CD8-positive, alpha-beta T cell (primary cell): ENCODE measurements at regions of chr20 and their contacts with region 1.

Region 1: GRCh38 chr20:58650776-58651558 is at the start of gene STX16:
- DNase-seq: peak; percentile 76 to 95 (median 86)
- ATAC-seq: peak; percentile 63
- H3K4me3 ChIP-seq: peak within 1 kb of the TSS; percentile 86 to 96
- H3K4me3 Mint-ChIP-seq: peak within 1 kb of the TSS; percentile 99
- H3K27ac ChIP-seq: peak within 1 kb of the TSS; percentile 87 to 92
- H3K27ac Mint-ChIP-seq: peak within 1 kb of the TSS; percentile 99
- H3K4me1 ChIP-seq: peaks cover 30% of the 10 kb centered on the region
- H3K4me1 Mint-ChIP-seq: peaks cover 27% of the 10 kb centered on the region
- H3K27me3 ChIP-seq: no peaks in the 10 kb centered on the region
- H3K27me3 Mint-ChIP-seq: no peaks in the 10 kb centered on the region
- CTCF ChIP-seq: peak; percentile 88
- total RNA-seq, gene STX16: 161 to 177 TPM

Region 2: DNA sequence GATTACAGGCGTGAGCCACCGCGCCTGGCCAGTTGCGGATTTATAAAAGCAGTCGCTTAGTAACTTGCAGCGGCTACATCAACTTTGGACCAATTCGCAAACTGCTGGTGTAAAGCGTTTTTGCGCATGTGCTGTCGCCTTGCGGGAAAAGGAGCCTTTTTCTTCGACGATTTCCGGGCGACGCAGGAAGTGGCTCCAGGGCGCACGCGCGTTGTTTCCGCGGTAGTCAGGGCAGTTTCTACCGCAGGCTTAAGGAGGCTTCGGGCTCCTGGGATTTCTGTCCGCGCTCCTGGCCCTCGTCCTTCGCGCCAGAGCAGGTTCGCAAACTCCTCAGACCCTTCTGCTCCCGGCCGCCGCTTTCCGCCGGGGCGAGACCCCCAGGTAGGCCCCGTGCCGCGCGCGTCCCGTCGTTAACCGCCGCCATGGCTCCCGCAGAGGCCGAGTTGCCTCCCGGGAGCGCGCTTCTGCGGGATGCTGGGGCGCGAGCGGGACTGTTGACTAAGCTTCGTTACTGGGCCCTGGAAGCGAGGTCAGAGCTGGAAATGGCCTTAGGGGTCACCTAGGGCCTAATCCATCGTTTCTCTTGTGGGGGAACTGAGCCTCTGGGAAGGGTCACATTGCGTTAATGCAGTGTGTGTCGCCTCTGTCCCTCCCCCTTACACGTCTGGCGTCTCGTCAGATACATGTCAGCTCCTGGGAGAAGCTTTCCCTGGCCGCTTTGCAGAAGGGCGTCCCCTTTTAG is 1299.8 kb before region 1 on chr20 and contains the start of gene RAE1:
- CTCF ChIA-PET with region 1: no interaction called
- POLR2A ChIA-PET with region 1: no interaction called
- intact Hi-C with region 1: loop called (anchors 5 to 10 kb)
- DNase-seq: peak; percentile 80 to 97 (median 92)
- ATAC-seq: peak; percentile 86
- H3K4me3 ChIP-seq: peak within 1 kb of the TSS; percentile 78 to 97
- H3K4me3 Mint-ChIP-seq: peak within 1 kb of the TSS; percentile 90
- H3K27ac ChIP-seq: peak within 1 kb of the TSS; percentile 78 to 84
- H3K27ac Mint-ChIP-seq: peak within 1 kb of the TSS; percentile 92
- H3K4me1 ChIP-seq: peaks cover 23% of the 10 kb centered on the region
- H3K4me1 Mint-ChIP-seq: peaks cover 27% of the 10 kb centered on the region
- H3K27me3 ChIP-seq: no peaks in the 10 kb centered on the region
- H3K27me3 Mint-ChIP-seq: no peaks in the 10 kb centered on the region
- CTCF ChIP-seq: no peak
- total RNA-seq, gene RAE1: 58.9 to 59.4 TPM

Region 3: GRCh38 chr20:57718490-57719271 is 932.3 kb before region 1 on chr20:
- CTCF ChIA-PET with region 1: no interaction called
- POLR2A ChIA-PET with region 1: no interaction called
- intact Hi-C with region 1: loop called (anchors 5 to 10 kb)
- DNase-seq: peak; percentile 78 to 96 (median 90)
- ATAC-seq: peak; percentile 97
- H3K4me3 ChIP-seq: peak overlapping the region; percentile 37 to 55
- H3K4me3 Mint-ChIP-seq: peak overlapping the region; percentile 69
- H3K27ac ChIP-seq: no peak overlapping the region
- H3K27ac Mint-ChIP-seq: peak overlapping the region; percentile 41
- H3K4me1 ChIP-seq: peaks cover 11% of the 10 kb centered on the region
- H3K4me1 Mint-ChIP-seq: peaks cover 11% of the 10 kb centered on the region
- H3K27me3 ChIP-seq: peaks cover 0 to 2% of the 10 kb centered on the region in 2 experiments
- H3K27me3 Mint-ChIP-seq: peaks cover 4% of the 10 kb centered on the region
- CTCF ChIP-seq: no peak

Region 4: DNA sequence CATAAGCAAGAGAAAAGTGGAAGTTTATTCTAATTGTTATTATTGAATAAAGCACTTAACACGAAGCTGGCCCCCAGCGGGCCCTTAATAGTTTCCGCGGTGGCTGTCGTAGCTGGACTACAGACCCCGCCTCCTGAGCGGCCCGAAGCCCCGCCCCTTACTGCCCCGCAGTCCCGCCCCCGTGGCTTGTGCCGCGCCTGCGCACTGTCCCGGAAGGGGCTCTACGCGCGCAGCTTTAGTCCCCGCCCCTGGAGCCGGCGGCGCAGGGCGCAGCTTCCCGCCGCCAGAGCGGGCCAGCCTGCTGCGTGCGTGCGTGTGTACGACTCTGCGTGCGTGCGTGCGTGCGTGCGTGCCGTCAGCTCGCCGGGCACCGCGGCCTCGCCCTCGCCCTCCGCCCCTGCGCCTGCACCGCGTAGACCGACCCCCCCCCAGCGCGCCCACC is 262.1 kb before region 1 on chr20 and contains the start of gene VAPB:
- CTCF ChIA-PET with region 1: no interaction called
- POLR2A ChIA-PET with region 1: interaction called, 8 read pairs
- intact Hi-C with region 1: loop called (anchors 1 kb)
- DNase-seq: peak; percentile 94 to 99 (median 97)
- ATAC-seq: peak; percentile 95
- H3K4me3 ChIP-seq: peak within 1 kb of the TSS; percentile 87 to 90
- H3K4me3 Mint-ChIP-seq: peak within 1 kb of the TSS; percentile 88
- H3K27ac ChIP-seq: peak within 1 kb of the TSS; percentile 98 to 99
- H3K27ac Mint-ChIP-seq: peak within 1 kb of the TSS; percentile 96
- H3K4me1 ChIP-seq: peaks cover 43% of the 10 kb centered on the region
- H3K4me1 Mint-ChIP-seq: peaks cover 40% of the 10 kb centered on the region
- H3K27me3 ChIP-seq: peaks cover 0 to 2% of the 10 kb centered on the region in 2 experiments
- H3K27me3 Mint-ChIP-seq: peaks cover 4% of the 10 kb centered on the region
- CTCF ChIP-seq: no peak
- total RNA-seq, gene VAPB: 29.3 to 32.3 TPM

Region 5: DNA sequence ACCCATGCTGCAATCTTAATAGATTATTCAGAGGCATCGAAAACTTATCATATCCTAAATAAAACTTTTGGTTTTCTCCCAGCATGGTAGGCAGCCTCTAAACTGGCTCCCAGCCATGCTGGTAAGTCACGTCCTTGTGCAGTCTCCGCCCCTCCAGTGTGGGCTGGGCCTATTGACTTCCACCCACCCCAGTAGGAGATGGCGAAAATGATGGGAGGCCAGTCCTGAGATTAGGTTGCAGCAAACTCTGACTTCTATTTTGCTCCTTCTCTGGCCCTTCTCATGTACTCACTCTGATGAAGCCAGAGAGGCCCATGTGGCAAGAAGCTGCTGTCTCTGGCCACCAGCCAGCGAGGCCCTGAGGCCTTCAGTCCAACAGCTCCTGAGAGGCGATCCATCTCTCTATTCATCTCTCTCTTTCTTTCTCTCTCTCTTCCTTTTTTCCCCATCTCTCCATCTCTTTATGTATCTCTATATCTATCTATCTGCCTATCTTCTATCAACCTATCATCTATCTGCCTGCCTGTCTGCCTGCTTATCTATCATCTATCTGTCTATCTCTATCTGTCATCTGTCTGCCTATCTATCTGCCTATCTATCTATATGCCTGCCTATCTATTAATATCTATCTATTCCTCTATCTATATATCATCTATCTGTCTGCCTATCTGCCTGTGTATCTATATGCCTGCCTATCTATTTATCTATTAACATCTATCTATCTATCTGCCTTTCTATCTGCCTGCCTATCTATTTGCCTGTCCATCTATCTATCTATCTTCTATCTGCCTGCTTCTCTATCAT is 52.6 kb before region 1 on chr20:
- CTCF ChIA-PET with region 1: no interaction called
- POLR2A ChIA-PET with region 1: no interaction called
- intact Hi-C with region 1: no loop called
- DNase-seq: no peak
- ATAC-seq: no peak
- H3K4me3 ChIP-seq: no peak overlapping the region
- H3K4me3 Mint-ChIP-seq: no peak overlapping the region
- H3K27ac ChIP-seq: no peak overlapping the region
- H3K27ac Mint-ChIP-seq: no peak overlapping the region
- H3K4me1 ChIP-seq: no peaks in the 10 kb centered on the region
- H3K4me1 Mint-ChIP-seq: no peaks in the 10 kb centered on the region
- H3K27me3 ChIP-seq: no peaks in the 10 kb centered on the region
- H3K27me3 Mint-ChIP-seq: peaks cover 9% of the 10 kb centered on the region
- CTCF ChIP-seq: no peak

Region 6: DNA sequence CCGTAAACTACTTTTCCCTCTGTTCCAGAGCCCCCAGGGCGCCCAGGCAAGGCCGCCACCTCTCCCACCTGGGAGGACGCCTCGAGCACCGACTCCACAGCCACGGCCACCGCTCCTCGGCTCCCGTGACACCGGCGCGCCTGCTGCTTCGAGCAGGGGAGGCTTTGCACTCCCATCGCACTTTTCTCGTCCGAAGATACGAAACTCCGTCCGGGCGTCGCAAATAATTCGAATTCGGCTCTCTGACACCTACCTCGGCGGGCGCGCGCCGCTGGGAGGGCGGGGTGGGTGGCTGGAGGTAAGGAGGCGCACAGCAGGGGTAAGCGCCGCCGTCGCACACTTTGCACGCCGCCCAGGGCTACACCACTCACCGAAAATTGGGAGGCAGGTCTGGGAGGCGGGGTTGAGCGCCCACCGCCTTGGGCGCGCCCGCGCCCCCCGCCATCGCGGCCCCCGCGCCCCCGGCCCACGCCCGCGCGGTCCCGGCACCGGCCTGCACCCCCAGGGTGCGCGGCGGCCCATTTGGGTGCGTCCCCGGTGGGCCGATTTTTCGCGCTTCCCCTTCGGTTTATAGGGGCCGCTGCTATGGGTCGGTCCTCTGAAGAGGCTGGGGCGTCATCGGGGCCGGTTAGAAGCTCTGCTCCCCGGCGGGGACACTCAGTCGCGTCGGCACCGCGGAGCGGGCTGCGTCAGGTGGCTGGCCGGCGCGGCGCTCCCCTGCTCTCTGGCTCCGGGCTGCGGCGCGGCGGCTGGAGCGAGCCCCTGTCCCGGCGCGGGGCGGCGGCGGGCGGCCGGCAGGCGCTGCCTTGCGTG is 237.8 kb after region 1 on chr20:
- CTCF ChIA-PET with region 1: no interaction called
- POLR2A ChIA-PET with region 1: interaction called, 23 read pairs
- intact Hi-C with region 1: loop called (anchors 1 to 2 kb)
- DNase-seq: peak; percentile 69 to 92 (median 82)
- ATAC-seq: peak; percentile 49
- H3K4me3 ChIP-seq: peak overlapping the region; percentile 66 to 72
- H3K4me3 Mint-ChIP-seq: peak overlapping the region; percentile 83
- H3K27ac ChIP-seq: peak overlapping the region; percentile 79 to 95
- H3K27ac Mint-ChIP-seq: peak overlapping the region; percentile 92
- H3K4me1 ChIP-seq: peaks cover 14% of the 10 kb centered on the region
- H3K4me1 Mint-ChIP-seq: peaks cover 35% of the 10 kb centered on the region
- H3K27me3 ChIP-seq: no peaks in the 10 kb centered on the region
- H3K27me3 Mint-ChIP-seq: no peaks in the 10 kb centered on the region
- CTCF ChIP-seq: no peak

Region 7: GRCh38 chr20:59159493-59160376 is 508.8 kb after region 1 on chr20:
- CTCF ChIA-PET with region 1: no interaction called
- POLR2A ChIA-PET with region 1: interaction called, 3 read pairs
- intact Hi-C with region 1: loop called in 1 of 2 experiments (anchors 5 kb)
- DNase-seq: peak; percentile 56 to 97 (median 79)
- ATAC-seq: peak; percentile 86
- H3K4me3 ChIP-seq: peak overlapping the region; percentile 47 to 67
- H3K4me3 Mint-ChIP-seq: peak overlapping the region; percentile 83
- H3K27ac ChIP-seq: peak overlapping the region; percentile 79 to 93
- H3K27ac Mint-ChIP-seq: peak overlapping the region; percentile 98
- H3K4me1 ChIP-seq: peaks cover 69% of the 10 kb centered on the region
- H3K4me1 Mint-ChIP-seq: peaks cover 91% of the 10 kb centered on the region
- H3K27me3 ChIP-seq: no peaks in the 10 kb centered on the region
- H3K27me3 Mint-ChIP-seq: no peaks in the 10 kb centered on the region
- CTCF ChIP-seq: peak; percentile 23